ENCODE measurements at regions of chr5 and their contacts with region 1.

Region 1: DNA sequence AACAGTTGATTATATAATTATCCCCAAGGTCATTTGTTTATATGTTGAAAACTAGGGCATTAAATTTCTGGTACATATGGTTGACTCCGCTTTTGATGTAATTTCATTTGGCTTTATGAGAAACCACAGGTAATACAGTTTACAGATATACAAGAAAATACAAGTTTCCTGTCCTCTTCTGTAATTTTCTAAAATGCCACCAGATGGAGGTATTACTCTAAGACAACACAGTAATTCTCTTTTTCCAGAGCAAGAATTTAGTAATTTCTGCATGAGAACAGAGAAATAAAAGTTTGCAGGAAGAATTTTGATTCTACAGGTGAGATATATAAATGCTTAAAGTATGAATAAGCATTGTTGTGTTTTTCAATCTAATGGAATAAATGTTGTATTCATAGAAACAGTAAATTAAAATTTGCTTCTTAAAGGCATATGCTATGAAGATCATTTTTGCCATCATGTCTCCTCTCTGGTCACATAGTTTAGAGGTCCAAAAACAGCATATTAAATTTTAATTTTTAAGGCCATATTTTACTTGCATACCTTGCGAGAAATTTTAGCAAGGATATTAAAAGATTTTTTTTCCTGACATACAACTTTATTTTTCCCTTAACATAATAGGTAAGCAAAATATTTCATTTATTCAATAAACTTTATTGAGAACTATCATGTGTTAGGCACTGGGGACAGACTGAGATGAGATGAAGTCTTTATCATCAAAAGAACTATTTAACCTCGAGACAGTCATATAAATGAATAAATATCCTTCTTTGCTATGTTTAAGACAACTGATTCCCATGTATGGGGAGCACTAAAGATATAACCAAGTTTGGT is 22.7 kb downstream of the CHD1 start:
- DNase-seq: no peak
- ATAC-seq: no peak
- H3K4me3 Mint-ChIP-seq: no peak overlapping the region
- H3K27ac Mint-ChIP-seq: no peak overlapping the region
- H3K4me1 Mint-ChIP-seq: peaks cover 23% of the 10 kb centered on the region
- H3K27me3 Mint-ChIP-seq: no peaks in the 10 kb centered on the region

Region 2: GRCh38 chr5:99032234-99033013 is 126.3 kb after region 1 on chr5:
- CTCF ChIA-PET with region 1: interaction called, 11 read pairs
- POLR2A ChIA-PET with region 1: no interaction called
- DNase-seq: peak; percentile 36
- ATAC-seq: no peak
- H3K4me3 Mint-ChIP-seq: peak overlapping the region; percentile 81
- H3K27ac Mint-ChIP-seq: peak overlapping the region; percentile 94
- H3K4me1 Mint-ChIP-seq: peaks cover 59% of the 10 kb centered on the region
- H3K27me3 Mint-ChIP-seq: no peaks in the 10 kb centered on the region